Caco-2 (cell line): ENCODE measurements at regions of chr11 and their contacts with region 1.

Region 1: GRCh38 chr11:113540416-113541330 is 65.5 kb upstream of the DRD2 start:
- DNase-seq: no peak
- H3K4me3 ChIP-seq: no peak overlapping the region
- H3K4me3 Mint-ChIP-seq: no peak overlapping the region
- H3K27ac Mint-ChIP-seq: peak overlapping the region; percentile 40
- H3K4me1 ChIP-seq: peaks cover 35% of the 10 kb centered on the region
- H3K4me1 Mint-ChIP-seq: peaks cover 43% of the 10 kb centered on the region
- H3K27me3 ChIP-seq: no peaks in the 10 kb centered on the region
- H3K27me3 Mint-ChIP-seq: no peaks in the 10 kb centered on the region
- CTCF ChIP-seq: peak; percentile 9 to 26

Region 2: DNA sequence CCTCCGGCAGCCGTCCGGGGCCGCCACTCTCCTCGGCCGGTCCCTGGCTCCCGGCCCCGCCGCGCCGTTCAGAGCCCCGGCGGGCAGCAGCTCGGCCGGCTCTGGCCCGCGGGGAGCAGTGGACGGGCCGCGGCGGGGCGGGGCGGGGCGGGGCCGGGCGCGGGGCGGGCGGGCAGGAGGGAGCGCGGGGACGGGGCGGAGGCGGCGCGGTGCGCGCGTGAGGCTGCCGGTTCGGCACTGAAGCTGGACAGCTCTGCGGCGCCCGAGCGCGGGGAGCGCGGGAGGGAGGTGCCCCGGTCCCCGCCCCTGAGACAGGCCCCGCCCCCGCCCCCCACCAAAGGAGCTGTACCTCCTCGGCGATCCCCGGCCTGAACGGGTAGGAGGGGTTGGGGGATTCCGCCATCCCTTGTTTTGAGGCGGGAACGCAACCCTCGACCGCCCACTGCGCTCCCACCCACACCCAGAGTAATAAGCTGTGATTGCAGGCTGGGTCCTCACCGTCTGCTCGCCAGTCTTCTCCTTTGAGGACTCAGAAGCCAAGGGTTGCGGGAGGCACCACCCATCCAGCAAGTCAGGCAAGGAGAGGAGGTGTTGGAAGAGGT is 65.4 kb before region 1 on chr11 and contains the start of gene DRD2:
- CTCF ChIA-PET with region 1: no interaction called
- POLR2A ChIA-PET with region 1: no interaction called
- intact Hi-C with region 1: no loop called
- DNase-seq: peak; percentile 64 to 74
- H3K4me3 ChIP-seq: peak within 1 kb of the TSS; percentile 43
- H3K4me3 Mint-ChIP-seq: peak within 1 kb of the TSS; percentile 59
- H3K27ac Mint-ChIP-seq: no peak within 1 kb of the TSS
- H3K4me1 ChIP-seq: peaks cover 8% of the 10 kb centered on the region; the same call in 1 of the 2 replicates
- H3K4me1 Mint-ChIP-seq: peaks cover 9% of the 10 kb centered on the region
- H3K27me3 ChIP-seq: peaks cover 7% of the 10 kb centered on the region
- H3K27me3 Mint-ChIP-seq: peaks cover 21% of the 10 kb centered on the region
- CTCF ChIP-seq: no peak
- total RNA-seq, gene DRD2: 13.9 and 17.6 TPM in 2 replicates

Region 3: GRCh38 chr11:113553235-113553634 is 12.6 kb after region 1 on chr11:
- CTCF ChIA-PET with region 1: no interaction called
- POLR2A ChIA-PET with region 1: no interaction called
- intact Hi-C with region 1: loop called (anchors 1 kb)
- DNase-seq: peak in 1 of 2 experiments; percentile 47
- H3K4me3 ChIP-seq: no peak overlapping the region
- H3K4me3 Mint-ChIP-seq: peak overlapping the region; percentile 12
- H3K27ac Mint-ChIP-seq: peak overlapping the region; percentile 46
- H3K4me1 ChIP-seq: peaks cover 55% of the 10 kb centered on the region
- H3K4me1 Mint-ChIP-seq: peaks cover 45% of the 10 kb centered on the region
- H3K27me3 ChIP-seq: no peaks in the 10 kb centered on the region
- H3K27me3 Mint-ChIP-seq: no peaks in the 10 kb centered on the region
- CTCF ChIP-seq: no peak

Region 4: DNA sequence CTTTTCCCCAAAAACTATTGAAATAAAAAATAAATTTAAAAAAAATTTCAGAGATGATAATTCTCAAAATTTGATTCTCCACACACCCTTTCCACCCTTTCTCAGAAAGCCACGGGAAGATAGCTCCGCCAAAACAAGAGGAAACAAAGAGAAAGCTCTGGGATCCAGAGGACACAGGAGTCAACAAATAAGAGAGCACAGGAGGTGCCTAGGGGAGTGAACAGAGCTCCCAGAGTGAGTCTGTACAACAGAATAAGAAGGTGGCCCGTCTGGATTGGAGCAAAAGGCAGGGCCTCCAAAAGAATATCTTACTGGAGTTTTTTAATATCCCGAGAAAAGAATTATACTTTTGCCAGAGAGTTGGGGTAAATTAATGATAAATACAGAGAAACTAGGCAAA is 30.9 kb after region 1 on chr11:
- CTCF ChIA-PET with region 1: interaction called, 10 read pairs
- POLR2A ChIA-PET with region 1: no interaction called
- intact Hi-C with region 1: loop called (anchors 1 kb)
- DNase-seq: no peak
- H3K4me3 ChIP-seq: no peak overlapping the region
- H3K4me3 Mint-ChIP-seq: no peak overlapping the region
- H3K27ac Mint-ChIP-seq: peak overlapping the region; percentile 65
- H3K4me1 ChIP-seq: peaks cover 59% of the 10 kb centered on the region
- H3K4me1 Mint-ChIP-seq: peaks cover 42% of the 10 kb centered on the region
- H3K27me3 ChIP-seq: no peaks in the 10 kb centered on the region
- H3K27me3 Mint-ChIP-seq: no peaks in the 10 kb centered on the region
- CTCF ChIP-seq: no peak

Region 5: GRCh38 chr11:113764527-113765219 is 224.0 kb after region 1 on chr11:
- CTCF ChIA-PET with region 1: no interaction called
- POLR2A ChIA-PET with region 1: no interaction called
- intact Hi-C with region 1: no loop called
- DNase-seq: no peak
- H3K4me3 ChIP-seq: no peak overlapping the region
- H3K4me3 Mint-ChIP-seq: no peak overlapping the region
- H3K27ac Mint-ChIP-seq: no peak overlapping the region
- H3K4me1 ChIP-seq: no peaks in the 10 kb centered on the region
- H3K4me1 Mint-ChIP-seq: no peaks in the 10 kb centered on the region
- H3K27me3 ChIP-seq: no peaks in the 10 kb centered on the region
- H3K27me3 Mint-ChIP-seq: no peaks in the 10 kb centered on the region
- CTCF ChIP-seq: no peak